ENCODE measurements at regions of chr5 and their contacts with region 1.

Region 1: GRCh38 chr5:107893642-107894041 is 222.9 kb upstream of the EFNA5 start:
- DNase-seq: no peak
- H3K4me3 ChIP-seq: no peak overlapping the region
- H3K27ac ChIP-seq: no peak overlapping the region
- H3K4me1 ChIP-seq: no peaks in the 10 kb centered on the region
- CTCF ChIP-seq: no peak

Region 2: GRCh38 chr5:107604832-107605389 is 288.7 kb before region 1 on chr5:
- CTCF ChIA-PET with region 1: no interaction called
- POLR2A ChIA-PET with region 1: no interaction called
- intact Hi-C with region 1: no loop called
- DNase-seq: peak; percentile 29
- H3K4me3 ChIP-seq: no peak overlapping the region
- H3K27ac ChIP-seq: no peak overlapping the region
- H3K4me1 ChIP-seq: peaks cover 33% of the 10 kb centered on the region
- CTCF ChIP-seq: no peak

Region 3: DNA sequence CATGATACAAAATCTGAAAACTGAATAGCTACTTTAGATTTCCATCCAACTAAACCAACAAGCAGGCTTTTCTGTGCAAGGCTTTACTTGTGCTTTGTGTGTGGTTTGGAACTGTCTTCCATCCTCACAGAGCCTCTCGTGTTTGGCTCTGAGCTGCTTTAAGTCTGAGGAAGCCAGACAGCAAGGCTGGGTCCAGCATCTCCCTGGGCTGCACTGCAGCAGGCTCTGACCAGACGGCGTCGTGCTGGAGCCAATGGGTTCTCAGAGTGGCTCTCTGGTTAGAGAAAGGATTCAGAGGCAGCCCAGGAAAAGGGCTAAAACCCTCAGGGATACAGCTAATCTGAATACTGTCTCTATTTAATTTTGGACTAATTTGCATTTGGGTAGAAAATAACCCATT is 15.0 kb before region 1 on chr5:
- CTCF ChIA-PET with region 1: no interaction called
- POLR2A ChIA-PET with region 1: interaction called, 11 read pairs
- intact Hi-C with region 1: no loop called
- DNase-seq: no peak
- H3K4me3 ChIP-seq: no peak overlapping the region
- H3K27ac ChIP-seq: no peak overlapping the region
- H3K4me1 ChIP-seq: no peaks in the 10 kb centered on the region
- CTCF ChIP-seq: no peak

Region 4: DNA sequence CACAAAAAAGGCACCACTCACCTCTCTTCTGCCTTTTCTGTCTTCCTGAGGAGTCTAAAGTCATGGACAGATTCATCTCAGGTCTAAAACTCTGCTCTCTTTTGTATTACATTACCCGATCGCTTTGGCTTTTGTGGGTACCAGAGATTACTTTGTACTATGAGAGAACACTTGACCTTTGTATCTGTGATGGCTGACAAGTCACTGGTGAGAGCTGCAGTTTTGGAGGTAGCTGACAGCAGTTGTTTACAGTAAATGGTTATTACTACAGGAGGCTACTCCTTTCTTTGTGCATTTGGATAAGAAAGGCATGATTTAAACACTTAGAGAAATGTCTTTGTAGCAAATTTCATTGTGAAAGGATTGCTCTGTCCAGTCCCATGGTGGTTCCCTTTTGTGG is 181.0 kb after region 1 on chr5:
- CTCF ChIA-PET with region 1: no interaction called
- POLR2A ChIA-PET with region 1: no interaction called
- intact Hi-C with region 1: no loop called
- DNase-seq: no peak
- H3K4me3 ChIP-seq: no peak overlapping the region
- H3K27ac ChIP-seq: no peak overlapping the region
- H3K4me1 ChIP-seq: no peaks in the 10 kb centered on the region
- CTCF ChIP-seq: no peak

Measured in OCI-LY7 (cell line).